Left cardiac atrium (tissue), 4 donors: ENCODE measurements at regions of chr7 and their contacts with region 1.

Region 1: DNA sequence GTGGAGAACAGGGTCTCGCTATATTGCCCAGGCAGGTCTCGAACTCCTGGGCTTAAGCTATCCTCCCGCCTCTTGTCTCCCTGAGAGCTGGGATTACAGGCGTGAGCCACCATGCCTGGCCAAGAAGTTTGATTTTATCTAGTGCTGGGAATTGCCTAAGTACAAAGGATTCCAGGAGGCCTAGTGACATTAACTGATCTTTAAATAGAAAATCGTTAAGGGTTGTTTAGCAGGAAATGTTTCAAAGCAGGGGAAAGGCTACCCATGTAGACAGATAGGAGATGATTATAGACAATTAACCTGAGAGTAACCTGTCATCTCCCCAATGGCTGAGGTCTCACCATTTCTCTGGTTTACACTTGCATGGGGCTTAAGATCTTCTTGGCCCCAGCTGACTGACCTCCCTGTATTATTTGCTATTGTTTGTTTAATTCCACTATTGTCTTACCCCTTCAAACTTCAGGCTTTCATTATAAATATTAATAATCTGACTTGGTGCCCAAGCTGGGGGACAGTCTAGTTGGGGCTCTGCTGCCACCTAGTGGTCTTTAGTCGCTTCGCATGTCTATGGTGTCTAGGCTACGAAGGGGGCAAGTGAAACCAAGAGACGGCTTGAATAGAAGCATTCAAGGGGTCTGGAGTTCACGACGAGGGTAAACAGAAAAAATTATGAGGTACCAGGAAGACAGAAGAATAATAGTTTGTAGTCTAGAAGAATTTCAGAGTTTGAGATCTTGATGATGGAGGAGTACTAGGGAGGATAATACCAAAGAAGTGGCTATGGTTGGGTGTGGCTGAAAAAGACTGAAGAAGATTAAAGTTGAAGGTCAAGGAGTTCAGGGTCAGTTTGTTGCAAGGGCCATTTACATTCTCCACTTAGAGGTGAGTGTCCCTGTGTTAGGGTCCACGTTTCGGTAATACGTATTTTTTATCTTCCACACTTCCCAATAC is 40.4 kb upstream of the BPGM start:
- DNase-seq: peak; percentile 60
- ATAC-seq: peak; percentile 90 to 91

Region 2: DNA sequence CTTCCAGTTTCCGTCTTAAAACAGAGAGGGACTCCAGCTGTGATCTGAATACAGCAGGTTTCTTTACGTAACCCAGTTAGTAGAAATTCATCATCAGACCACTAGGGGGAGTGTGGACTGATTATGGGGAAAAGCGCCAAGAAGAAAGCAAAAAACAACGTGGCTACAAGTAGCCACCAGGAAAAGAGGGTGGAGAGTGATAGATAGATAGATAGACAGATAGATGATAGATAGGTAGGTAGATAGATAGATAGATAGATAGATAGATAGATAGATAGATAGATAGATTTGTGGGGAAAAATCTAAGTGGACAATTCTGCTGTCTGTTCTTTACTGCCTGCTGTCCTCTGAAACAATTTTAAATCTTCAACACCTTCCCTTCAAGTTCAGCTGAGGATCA is 91.6 kb before region 1 on chr7:
- intact Hi-C with region 1: loop called (anchors 2 to 5 kb)
- DNase-seq: no peak
- ATAC-seq: peak; percentile 53 to 70

Region 3: DNA sequence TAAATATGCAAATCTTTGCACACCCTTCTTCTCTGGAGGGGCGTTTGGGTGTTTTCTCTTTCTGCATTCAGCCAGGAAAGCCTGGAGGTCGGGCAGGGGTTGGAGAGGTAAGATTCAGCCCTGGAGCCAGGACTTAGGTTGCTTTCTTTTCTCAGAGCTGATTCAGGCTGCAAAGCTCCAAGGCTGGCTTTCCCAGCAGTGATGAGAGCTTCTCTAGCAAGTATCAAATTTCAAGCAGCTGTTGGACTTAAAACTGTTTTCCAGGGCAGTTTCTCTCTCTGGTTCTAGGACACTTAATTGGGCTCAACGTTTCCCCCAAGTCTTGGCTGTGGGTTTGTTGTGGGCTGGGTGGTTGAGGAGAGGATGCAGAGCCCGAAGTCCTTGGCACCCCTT is 78.3 kb before region 1 on chr7:
- intact Hi-C with region 1: no loop called
- DNase-seq: no peak
- ATAC-seq: peak; percentile 53 to 69

Region 4: GRCh38 chr7:134547397-134548054 is 58.7 kb before region 1 on chr7:
- intact Hi-C with region 1: loop called (anchors 5 to 10 kb)
- DNase-seq: peak; percentile 80
- ATAC-seq: peak; percentile 94 to 95